ENCODE measurements at regions of chr7 and their contacts with region 1.

Region 1: DNA sequence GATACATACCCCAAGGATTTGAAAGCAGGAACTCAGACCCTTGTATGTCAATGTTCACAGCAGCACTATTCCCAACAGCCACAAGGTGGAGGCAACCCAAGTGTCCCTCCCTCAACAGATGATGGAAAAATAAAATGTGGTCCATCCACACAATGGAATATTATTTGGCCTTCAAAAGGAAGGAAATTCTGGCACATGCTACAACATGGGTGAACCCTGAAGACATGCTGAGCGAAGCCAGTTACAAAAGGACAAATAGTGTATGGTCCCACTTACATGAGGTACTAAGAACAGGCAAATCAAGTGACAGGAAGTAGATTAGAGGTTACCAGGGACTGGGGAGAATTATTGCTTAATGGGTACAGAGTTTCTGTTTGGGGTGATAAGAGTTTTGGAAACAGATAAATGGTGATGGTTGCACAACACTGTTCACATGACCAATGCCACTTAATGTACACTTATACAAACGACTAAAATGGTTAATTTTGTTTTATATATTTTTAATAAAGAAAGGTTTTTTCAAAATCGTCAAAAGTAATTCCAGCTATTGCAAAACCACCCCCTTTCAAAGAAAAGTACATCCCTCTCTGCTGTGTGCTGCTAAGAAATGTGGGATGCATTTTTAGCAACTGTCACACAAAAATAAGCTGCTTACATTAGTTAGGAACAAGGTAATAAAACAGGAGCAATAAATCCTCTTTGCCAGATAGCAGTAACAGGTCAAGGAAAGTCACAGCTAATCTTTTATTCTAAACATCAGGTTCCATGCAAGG is 85.7 kb downstream of the GRB10 start:
- DNase-seq: peak in 5 of 9 donors; percentile 27 to 43 (median 38)
- ATAC-seq: peak; percentile 63
- H3K4me3 ChIP-seq: no peak overlapping the region
- H3K4me3 Mint-ChIP-seq: peak overlapping the region in 1 of 10 donors; percentile 3
- H3K27ac ChIP-seq: no peak overlapping the region
- H3K27ac Mint-ChIP-seq: peak overlapping the region in 2 of 9 donors; percentile 16 to 19
- H3K4me1 ChIP-seq: no peaks in the 10 kb centered on the region
- H3K4me1 Mint-ChIP-seq: peaks cover 0 to 9% (median 5%) of the 10 kb centered on the region in 7 donors
- H3K27me3 ChIP-seq: no peaks in the 10 kb centered on the region
- H3K27me3 Mint-ChIP-seq: peaks cover 0 to 3% (median 0%) of the 10 kb centered on the region in 5 donors

Region 2: DNA sequence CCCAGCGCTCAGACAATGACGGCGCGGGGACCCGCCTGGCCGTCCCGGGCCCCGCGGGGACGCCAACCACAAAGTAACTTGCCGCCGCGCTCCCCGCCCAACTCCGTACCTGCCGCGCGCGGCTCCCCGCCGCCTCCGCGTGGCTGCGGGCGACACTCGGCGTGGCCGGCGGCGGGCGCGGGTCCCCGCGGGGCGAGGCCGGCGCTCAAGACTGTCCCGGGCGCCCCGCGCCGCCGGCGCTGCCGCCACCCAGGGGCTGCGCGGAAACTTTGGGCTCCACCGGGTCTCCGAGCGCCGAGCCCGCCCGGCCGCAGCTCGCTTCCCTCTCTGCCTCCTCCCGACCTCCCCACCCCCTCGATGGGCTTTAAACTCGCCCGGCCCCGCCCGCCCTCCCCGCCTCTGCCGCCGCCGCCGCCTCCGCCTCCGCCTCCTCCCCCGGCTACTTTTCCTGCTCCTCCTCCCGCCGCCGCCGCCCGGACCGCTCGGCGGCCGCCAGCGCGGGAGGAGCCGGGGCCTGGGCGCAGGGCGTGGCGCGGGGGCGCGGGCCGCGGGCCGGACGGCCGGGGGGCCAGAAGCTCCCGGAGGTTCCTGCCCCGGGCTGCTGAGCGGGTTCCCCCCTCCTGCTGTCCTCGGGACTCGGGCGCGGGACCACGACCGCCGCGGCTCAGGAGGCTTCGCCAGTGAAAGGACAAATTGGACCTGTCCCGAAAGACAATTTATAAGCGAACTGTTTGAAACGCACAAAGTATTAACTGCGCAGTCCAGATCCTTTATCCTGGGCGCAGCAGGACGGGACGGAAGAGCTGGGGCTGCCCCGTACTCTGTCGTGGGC is 96.3 kb after region 1 on chr7:
- CTCF ChIA-PET with region 1: no interaction called
- POLR2A ChIA-PET with region 1: no interaction called
- intact Hi-C with region 1: loop called (anchors 1 to 5 kb)
- DNase-seq: peak in 8 of 9 donors; percentile 17 to 43 (median 34)
- ATAC-seq: peak; percentile 68
- H3K4me3 ChIP-seq: no peak overlapping the region
- H3K4me3 Mint-ChIP-seq: peak overlapping the region; percentile 52 to 89 (median 77)
- H3K27ac ChIP-seq: no peak overlapping the region
- H3K27ac Mint-ChIP-seq: peak overlapping the region in 4 of 9 donors; percentile 6 to 87 (median 48)
- H3K4me1 ChIP-seq: peaks cover 0 to 3% of the 10 kb centered on the region in 2 donors
- H3K4me1 Mint-ChIP-seq: peaks cover 0 to 37% (median 16%) of the 10 kb centered on the region in 7 donors
- H3K27me3 ChIP-seq: peaks cover 0 to 4% of the 10 kb centered on the region in 2 donors
- H3K27me3 Mint-ChIP-seq: peaks cover 23 to 80% (median 34%) of the 10 kb centered on the region in 5 donors

Region 3: GRCh38 chr7:51067757-51068156 is 370.8 kb after region 1 on chr7:
- CTCF ChIA-PET with region 1: no interaction called
- POLR2A ChIA-PET with region 1: no interaction called
- intact Hi-C with region 1: loop called in 1 of 2 experiments (anchors 2 kb)
- DNase-seq: peak in 6 of 9 donors; percentile 32 to 55 (median 44)
- ATAC-seq: peak; percentile 13
- H3K4me3 ChIP-seq: no peak overlapping the region
- H3K4me3 Mint-ChIP-seq: no peak overlapping the region
- H3K27ac ChIP-seq: no peak overlapping the region
- H3K27ac Mint-ChIP-seq: no peak overlapping the region
- H3K4me1 ChIP-seq: no peaks in the 10 kb centered on the region
- H3K4me1 Mint-ChIP-seq: peaks cover 0 to 2% (median 0%) of the 10 kb centered on the region in 7 donors
- H3K27me3 ChIP-seq: no peaks in the 10 kb centered on the region
- H3K27me3 Mint-ChIP-seq: no peaks in the 10 kb centered on the region

Region 4: DNA sequence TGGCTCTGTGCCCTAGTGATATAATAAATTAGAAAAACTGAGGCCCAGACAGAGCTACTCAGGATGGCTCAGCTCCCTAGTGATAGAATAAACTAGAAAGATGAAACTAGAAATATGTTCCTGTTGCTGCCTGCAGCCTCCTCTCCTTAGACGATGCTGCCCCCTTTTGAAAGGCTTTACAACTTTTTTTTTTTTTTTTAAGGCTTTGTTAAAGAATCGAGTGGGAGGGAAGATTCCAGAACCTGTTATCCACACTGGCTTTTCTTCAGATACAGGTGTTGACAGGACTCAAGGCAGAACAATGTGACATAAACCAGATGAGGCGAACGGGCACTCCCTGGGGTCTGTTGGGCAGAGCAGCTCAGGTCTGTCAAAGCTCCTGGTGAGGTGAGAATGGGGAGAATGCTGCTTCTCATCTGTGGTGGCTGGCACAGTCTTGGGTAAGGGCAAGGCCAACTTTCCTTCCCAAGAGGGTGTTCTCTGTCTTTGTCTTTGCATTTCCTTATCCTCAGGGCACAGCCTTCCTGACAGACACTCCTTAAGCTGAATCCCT is 444.5 kb after region 1 on chr7:
- CTCF ChIA-PET with region 1: no interaction called
- POLR2A ChIA-PET with region 1: no interaction called
- intact Hi-C with region 1: loop called (anchors 1 kb)
- DNase-seq: peak in 4 of 9 donors; percentile 16 to 39 (median 26)
- ATAC-seq: peak; percentile 24
- H3K4me3 ChIP-seq: no peak overlapping the region
- H3K4me3 Mint-ChIP-seq: no peak overlapping the region
- H3K27ac ChIP-seq: no peak overlapping the region
- H3K27ac Mint-ChIP-seq: no peak overlapping the region
- H3K4me1 ChIP-seq: no peaks in the 10 kb centered on the region
- H3K4me1 Mint-ChIP-seq: peaks cover 0 to 17% (median 4%) of the 10 kb centered on the region in 7 donors
- H3K27me3 ChIP-seq: no peaks in the 10 kb centered on the region
- H3K27me3 Mint-ChIP-seq: peaks cover 0 to 10% (median 5%) of the 10 kb centered on the region in 5 donors

Region 5: GRCh38 chr7:51324206-51324884 is 627.3 kb after region 1 on chr7:
- CTCF ChIA-PET with region 1: no interaction called
- POLR2A ChIA-PET with region 1: no interaction called
- intact Hi-C with region 1: no loop called
- DNase-seq: no peak
- ATAC-seq: no peak
- H3K4me3 ChIP-seq: no peak overlapping the region
- H3K4me3 Mint-ChIP-seq: no peak overlapping the region
- H3K27ac ChIP-seq: no peak overlapping the region
- H3K27ac Mint-ChIP-seq: no peak overlapping the region
- H3K4me1 ChIP-seq: no peaks in the 10 kb centered on the region
- H3K4me1 Mint-ChIP-seq: no peaks in the 10 kb centered on the region
- H3K27me3 ChIP-seq: no peaks in the 10 kb centered on the region
- H3K27me3 Mint-ChIP-seq: peaks cover 0 to 8% (median 5%) of the 10 kb centered on the region in 5 donors